OCI-LY7 (cell line): ENCODE measurements at regions of chr19 and their contacts with region 1.

Region 1: GRCh38 chr19:10332955-10333757 is at the start of gene RAVER1:
- DNase-seq: peak; percentile 99
- H3K4me3 ChIP-seq: peak within 1 kb of the TSS; percentile 83
- H3K27ac ChIP-seq: peak within 1 kb of the TSS; percentile 82
- H3K4me1 ChIP-seq: peaks cover 29% of the 10 kb centered on the region
- CTCF ChIP-seq: no peak
- total RNA-seq, gene RAVER1: 21.6 and 35.7 TPM in 2 replicates

Region 2: DNA sequence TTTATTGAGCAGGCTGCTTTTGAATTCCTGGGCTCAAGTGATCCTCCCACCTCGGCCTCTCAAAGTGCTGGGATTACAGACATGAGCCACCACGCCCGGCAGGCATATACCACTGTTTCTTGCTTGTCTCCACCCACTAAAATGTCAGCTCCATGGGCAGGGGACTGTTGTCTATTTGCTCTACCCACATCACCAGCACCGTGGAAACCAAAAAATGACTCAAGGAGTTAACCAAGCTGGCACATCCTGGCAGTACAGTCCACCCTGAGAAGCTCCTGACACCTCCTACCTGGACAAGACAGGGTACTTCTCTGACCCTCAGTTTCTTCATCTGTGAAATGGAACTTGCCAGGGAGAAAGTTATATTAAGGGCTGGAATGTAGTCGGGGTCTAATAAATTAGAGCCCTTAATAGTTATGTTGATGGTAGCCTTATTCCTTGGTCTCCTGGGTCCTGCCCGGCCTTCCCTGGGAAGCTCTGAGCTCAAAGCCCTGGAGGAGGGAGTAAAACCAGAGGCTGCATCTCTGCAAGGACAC is 305.9 kb before region 1 on chr19:
- CTCF ChIA-PET with region 1: interaction called, 11 read pairs
- POLR2A ChIA-PET with region 1: no interaction called
- intact Hi-C with region 1: no loop called
- DNase-seq: no peak
- H3K4me3 ChIP-seq: no peak overlapping the region
- H3K27ac ChIP-seq: no peak overlapping the region
- H3K4me1 ChIP-seq: no peaks in the 10 kb centered on the region
- CTCF ChIP-seq: no peak

Region 3: GRCh38 chr19:10189616-10190015 is 143.5 kb before region 1 on chr19:
- CTCF ChIA-PET with region 1: no interaction called
- POLR2A ChIA-PET with region 1: no interaction called
- intact Hi-C with region 1: no loop called
- DNase-seq: no peak
- H3K4me3 ChIP-seq: peak overlapping the region; percentile 31
- H3K27ac ChIP-seq: peak overlapping the region; percentile 1
- H3K4me1 ChIP-seq: peaks cover 65% of the 10 kb centered on the region
- CTCF ChIP-seq: no peak

Region 4: GRCh38 chr19:10380313-10381102 is 47.4 kb after region 1 on chr19 and contains the start of gene TYK2:
- CTCF ChIA-PET with region 1: interaction called, 6 read pairs
- POLR2A ChIA-PET with region 1: interaction called, 5 read pairs
- intact Hi-C with region 1: loop called (anchors 2 kb)
- DNase-seq: peak; percentile 99
- H3K4me3 ChIP-seq: peak within 1 kb of the TSS; percentile 91
- H3K27ac ChIP-seq: peak within 1 kb of the TSS; percentile 52
- H3K4me1 ChIP-seq: peaks cover 10% of the 10 kb centered on the region
- CTCF ChIP-seq: 0 out of 2 replicates have a peak, but pooled peaks have one; percentile 17
- total RNA-seq, gene TYK2: 151 and 185 TPM in 2 replicates